ENCODE measurements at regions of chr22 and their contacts with region 1.

Region 1: GRCh38 chr22:29040385-29041275 is 21.0 kb downstream of the C22orf31 start:
- DNase-seq: peak; percentile 88
- H3K4me3 ChIP-seq: no peak overlapping the region
- H3K27ac ChIP-seq: peak overlapping the region; percentile 2
- H3K27me3 ChIP-seq: no peaks in the 10 kb centered on the region
- CTCF ChIP-seq: peak; percentile 98

Region 2: GRCh38 chr22:28810821-28811491 is 229.7 kb before region 1 on chr22:
- CTCF ChIA-PET with region 1: interaction called, 11 read pairs
- POLR2A ChIA-PET with region 1: no interaction called
- DNase-seq: no peak
- H3K4me3 ChIP-seq: no peak overlapping the region
- H3K27ac ChIP-seq: no peak overlapping the region
- H3K27me3 ChIP-seq: no peaks in the 10 kb centered on the region
- CTCF ChIP-seq: no peak

Region 3: DNA sequence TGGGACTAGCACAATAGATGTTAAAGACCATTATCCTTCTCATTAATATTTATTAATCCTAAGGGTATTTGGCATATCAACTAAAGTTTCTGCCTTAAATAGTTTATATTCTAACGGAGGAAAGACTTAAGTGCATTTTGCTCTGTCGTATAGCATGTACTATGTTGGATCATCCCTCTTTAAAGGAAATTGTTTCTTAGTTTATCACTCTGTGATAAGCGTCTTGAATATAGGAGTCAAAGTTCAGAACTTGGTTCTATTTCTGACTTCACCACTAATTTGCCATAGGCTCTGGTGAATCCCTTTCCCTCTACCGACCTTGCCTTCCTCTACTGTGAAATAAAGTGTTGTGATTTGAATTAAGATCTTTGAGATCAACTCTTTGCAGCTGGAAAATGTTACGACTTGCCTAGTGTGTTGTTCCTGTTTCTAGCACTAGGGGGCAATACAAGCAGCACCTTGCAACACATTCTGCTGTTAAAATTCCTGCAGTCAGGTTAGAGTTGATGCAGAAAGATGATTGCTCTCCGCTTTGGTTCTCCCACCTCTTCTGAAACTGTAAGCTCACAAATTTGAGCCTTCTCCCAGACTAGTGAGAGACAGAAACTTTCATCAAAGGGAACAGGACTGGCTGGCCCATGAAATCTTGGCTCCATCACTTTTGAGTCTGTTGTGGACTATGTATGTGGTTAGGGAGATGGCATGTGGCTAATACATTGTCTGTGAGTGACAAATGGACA is 185.1 kb before region 1 on chr22:
- CTCF ChIA-PET with region 1: interaction called, 81 read pairs
- POLR2A ChIA-PET with region 1: no interaction called
- DNase-seq: peak; percentile 58
- H3K4me3 ChIP-seq: no peak overlapping the region
- H3K27ac ChIP-seq: no peak overlapping the region
- H3K27me3 ChIP-seq: no peaks in the 10 kb centered on the region
- CTCF ChIP-seq: peak; percentile 97

Region 4: GRCh38 chr22:28904211-28904896 is 136.3 kb before region 1 on chr22:
- CTCF ChIA-PET with region 1: interaction called, 12 read pairs
- POLR2A ChIA-PET with region 1: interaction called, 7 read pairs
- DNase-seq: no peak
- H3K4me3 ChIP-seq: peak overlapping the region; percentile 18
- H3K27ac ChIP-seq: peak overlapping the region; percentile 43
- H3K27me3 ChIP-seq: no peaks in the 10 kb centered on the region
- CTCF ChIP-seq: no peak

Region 5: DNA sequence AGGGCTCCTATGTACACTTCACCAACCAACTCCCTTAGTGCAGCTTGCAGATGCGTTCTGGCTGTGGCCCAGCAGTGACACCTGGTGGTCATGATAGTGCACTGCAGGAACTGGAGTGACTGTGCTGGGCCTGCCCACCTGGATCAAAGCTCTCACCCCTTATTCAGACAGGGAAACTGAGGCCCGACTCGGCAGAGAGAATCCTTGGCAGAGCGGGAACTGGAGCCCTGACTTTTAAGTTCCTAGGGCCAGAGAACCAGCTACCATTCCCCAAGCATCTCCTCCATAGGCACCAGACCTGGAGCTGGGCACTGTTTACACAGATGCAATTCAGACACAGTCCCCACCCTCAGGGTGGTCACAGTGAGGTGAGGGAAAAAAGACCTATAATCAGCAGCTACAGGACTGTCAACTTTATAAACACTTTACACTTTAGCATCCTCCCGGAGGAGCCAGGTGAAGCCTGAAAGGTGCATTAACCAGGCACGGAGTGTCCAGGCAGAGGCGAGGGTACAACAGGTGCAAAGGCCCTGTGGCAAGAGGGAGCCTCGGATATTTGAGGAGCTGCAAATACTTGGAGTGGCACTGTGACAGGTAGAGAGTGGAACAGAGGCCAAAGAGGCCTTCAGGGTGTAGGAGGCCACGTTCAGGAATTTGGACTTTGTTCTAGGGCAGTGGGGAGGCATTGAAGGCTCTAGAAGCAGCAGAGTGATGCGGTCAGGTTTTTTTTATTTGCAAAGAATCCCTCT is 205.2 kb after region 1 on chr22:
- CTCF ChIA-PET with region 1: interaction called, 14 read pairs
- POLR2A ChIA-PET with region 1: no interaction called
- DNase-seq: peak; percentile 29
- H3K4me3 ChIP-seq: no peak overlapping the region
- H3K27ac ChIP-seq: no peak overlapping the region
- H3K27me3 ChIP-seq: peaks cover 8% of the 10 kb centered on the region
- CTCF ChIP-seq: peak; percentile 99

Region 6: DNA sequence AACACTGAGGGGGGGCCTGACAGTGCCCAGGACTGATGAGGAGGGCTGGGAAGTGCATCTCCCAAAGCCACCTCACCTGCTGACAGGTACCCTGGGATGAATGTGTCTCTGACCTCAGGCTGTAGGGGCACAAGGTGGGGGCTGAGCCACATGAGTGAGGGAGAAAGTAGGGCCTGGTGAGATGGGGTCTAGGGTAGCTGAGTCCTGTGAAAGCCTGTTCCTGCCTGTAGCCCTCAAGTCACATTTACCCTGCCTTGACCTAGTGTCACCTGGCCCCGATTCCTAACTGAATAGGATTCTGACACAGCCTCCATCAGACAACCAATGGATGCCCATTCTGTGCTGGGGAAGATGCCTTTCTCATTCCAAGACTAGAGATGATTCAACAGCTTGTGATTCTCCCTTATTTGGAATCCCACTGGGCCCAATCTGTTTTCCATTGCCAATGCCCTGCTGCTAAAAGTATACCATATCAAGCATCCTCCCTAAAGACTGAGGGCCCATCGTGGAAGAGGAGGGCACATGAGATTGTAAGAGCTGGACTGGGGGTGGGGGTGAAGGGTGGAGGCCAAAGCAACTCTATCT is 386.6 kb after region 1 on chr22:
- CTCF ChIA-PET with region 1: no interaction called
- POLR2A ChIA-PET with region 1: no interaction called
- DNase-seq: no peak
- H3K4me3 ChIP-seq: no peak overlapping the region
- H3K27ac ChIP-seq: no peak overlapping the region
- H3K27me3 ChIP-seq: peaks cover 32% of the 10 kb centered on the region
- CTCF ChIP-seq: no peak

Measured in AG04450 (cell line).